Mammary epithelial cell (primary cell): ENCODE measurements at regions of chr11 and their contacts with region 1.

Region 1: DNA sequence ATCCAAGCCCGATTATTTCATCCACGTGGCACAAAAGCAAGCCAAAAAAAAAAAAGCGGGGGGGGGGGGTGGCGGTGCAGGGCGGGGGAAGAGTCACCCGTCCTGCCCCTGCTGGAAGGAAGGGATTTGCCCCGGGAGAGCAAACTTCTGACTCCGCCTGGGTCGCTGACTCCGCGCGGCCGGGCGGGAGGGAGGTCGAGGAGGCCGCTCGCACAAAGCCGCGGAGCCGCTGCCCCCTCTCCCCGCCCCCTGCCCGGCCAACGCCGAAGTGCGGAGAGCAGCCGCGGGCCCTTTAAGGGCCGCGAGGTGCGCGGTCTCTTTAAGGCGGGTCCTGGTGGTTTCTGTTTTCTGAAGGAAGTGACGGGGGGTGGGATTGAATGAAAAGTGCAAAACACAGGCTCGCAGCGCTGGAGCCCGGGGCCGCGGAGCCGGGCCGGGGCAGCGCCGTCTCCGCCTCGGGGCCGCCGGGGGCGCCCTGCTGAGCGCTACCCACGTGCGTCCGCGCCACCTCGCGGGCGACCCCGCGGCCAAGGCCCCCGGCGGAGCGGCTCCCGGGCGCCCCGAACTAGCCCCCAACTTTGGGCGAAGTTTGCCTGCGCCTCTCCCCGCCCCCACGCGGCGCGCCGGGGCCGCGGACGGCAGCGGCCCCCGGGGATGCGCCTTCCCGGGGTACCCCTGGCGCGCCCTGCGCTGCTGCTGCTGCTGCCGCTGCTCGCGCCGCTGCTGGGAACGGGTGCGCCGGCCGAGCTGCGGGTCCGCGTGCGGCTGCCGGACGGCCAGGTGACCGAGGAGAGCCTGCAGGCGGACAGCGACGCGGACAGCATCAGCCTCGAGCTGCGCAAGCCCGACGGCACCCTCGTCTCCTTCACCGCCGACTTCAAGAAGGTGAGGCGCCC is at the start of gene OAF:
- DNase-seq: peak; percentile 80
- H3K4me3 ChIP-seq: peak within 1 kb of the TSS; percentile 53 to 63 (median 63)
- H3K27ac ChIP-seq: peak within 1 kb of the TSS; percentile 59
- H3K4me1 ChIP-seq: peaks cover 17% of the 10 kb centered on the region
- H3K27me3 ChIP-seq: no peaks in the 10 kb centered on the region
- CTCF ChIP-seq: peak; percentile 13 to 16
- total RNA-seq, gene OAF: 4.7 to 20.3 TPM

Region 2: DNA sequence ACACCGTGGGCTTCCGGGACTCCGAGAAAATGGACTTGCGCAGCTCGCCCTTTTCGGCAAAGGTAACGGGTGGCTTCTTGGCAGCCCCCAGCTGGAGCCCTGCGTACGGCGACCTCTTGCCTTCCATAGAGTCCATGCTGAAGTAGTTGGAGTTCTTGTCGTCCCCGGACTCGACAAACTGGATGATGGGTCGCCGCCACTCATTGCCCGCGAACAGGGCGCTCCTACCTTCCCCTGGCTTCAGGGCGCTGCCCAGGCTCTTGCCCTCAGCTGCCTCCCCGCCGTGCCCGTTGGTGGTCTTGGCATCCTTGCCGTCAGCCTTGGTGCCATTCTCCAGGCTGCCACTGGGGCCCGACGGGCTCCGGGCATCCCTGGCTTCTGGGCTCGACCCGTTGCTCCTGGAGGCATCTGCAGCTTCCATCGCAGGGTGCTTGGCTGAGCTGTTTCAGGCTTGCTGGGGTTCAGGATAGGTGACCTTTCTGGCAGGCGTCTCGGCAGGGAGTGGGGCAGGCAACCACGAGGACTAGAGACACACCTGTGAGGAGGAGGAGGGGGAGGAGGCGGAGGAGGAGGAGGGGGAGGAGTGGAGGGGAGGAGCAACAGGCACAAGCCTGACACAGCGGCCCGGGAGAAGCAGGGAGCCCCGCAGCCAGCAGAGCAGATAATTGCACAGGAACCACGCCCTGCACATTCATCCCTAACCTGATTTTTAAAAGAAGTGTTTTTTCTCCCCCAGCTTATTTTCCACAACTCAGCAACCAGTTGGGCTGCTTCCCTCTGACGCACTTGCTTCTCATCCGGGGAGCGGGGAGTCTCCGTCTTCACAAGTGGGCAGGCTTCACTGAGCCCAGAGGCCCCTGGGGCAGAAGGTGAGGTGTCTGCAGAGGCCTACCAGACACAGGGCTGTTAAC is 73.0 kb before region 1 on chr11 and contains the start of gene TRIM29:
- CTCF ChIA-PET with region 1: no interaction called
- dilution Hi-C with region 1: no loop called
- in situ Hi-C with region 1: no loop called
- intact Hi-C with region 1: loop called (anchors 10 kb)
- DNase-seq: peak; percentile 92
- H3K4me3 ChIP-seq: peak within 1 kb of the TSS; percentile 51 to 97 (median 96)
- H3K27ac ChIP-seq: peak within 1 kb of the TSS; percentile 78
- H3K4me1 ChIP-seq: peaks cover 37% of the 10 kb centered on the region
- H3K27me3 ChIP-seq: no peaks in the 10 kb centered on the region
- CTCF ChIP-seq: peak; percentile 59 to 60
- total RNA-seq, gene TRIM29: 256 to 341 TPM

Region 3: GRCh38 chr11:120186774-120187591 is 23.9 kb before region 1 on chr11:
- CTCF ChIA-PET with region 1: no interaction called
- dilution Hi-C with region 1: no loop called
- in situ Hi-C with region 1: no loop called
- intact Hi-C with region 1: loop called (anchors 2 kb)
- DNase-seq: peak; percentile 93
- H3K4me3 ChIP-seq: no peak overlapping the region
- H3K27ac ChIP-seq: no peak overlapping the region
- H3K4me1 ChIP-seq: peaks cover 8% of the 10 kb centered on the region
- H3K27me3 ChIP-seq: no peaks in the 10 kb centered on the region
- CTCF ChIP-seq: no peak

Region 4: GRCh38 chr11:120229451-120230424 is 18.9 kb after region 1 on chr11:
- CTCF ChIA-PET with region 1: no interaction called
- dilution Hi-C with region 1: no loop called
- in situ Hi-C with region 1: no loop called
- intact Hi-C with region 1: loop called (anchors 2 kb)
- DNase-seq: no peak
- H3K4me3 ChIP-seq: no peak overlapping the region
- H3K27ac ChIP-seq: no peak overlapping the region
- H3K4me1 ChIP-seq: no peaks in the 10 kb centered on the region
- H3K27me3 ChIP-seq: no peaks in the 10 kb centered on the region
- CTCF ChIP-seq: peak; percentile 64 to 71

Region 5: GRCh38 chr11:120254788-120255518 is 44.1 kb after region 1 on chr11:
- CTCF ChIA-PET with region 1: no interaction called
- dilution Hi-C with region 1: loop called (anchors 5 kb)
- in situ Hi-C with region 1: no loop called
- intact Hi-C with region 1: no loop called
- DNase-seq: no peak
- H3K4me3 ChIP-seq: no peak overlapping the region
- H3K27ac ChIP-seq: no peak overlapping the region
- H3K4me1 ChIP-seq: no peaks in the 10 kb centered on the region
- H3K27me3 ChIP-seq: no peaks in the 10 kb centered on the region
- CTCF ChIP-seq: no peak

Region 6: DNA sequence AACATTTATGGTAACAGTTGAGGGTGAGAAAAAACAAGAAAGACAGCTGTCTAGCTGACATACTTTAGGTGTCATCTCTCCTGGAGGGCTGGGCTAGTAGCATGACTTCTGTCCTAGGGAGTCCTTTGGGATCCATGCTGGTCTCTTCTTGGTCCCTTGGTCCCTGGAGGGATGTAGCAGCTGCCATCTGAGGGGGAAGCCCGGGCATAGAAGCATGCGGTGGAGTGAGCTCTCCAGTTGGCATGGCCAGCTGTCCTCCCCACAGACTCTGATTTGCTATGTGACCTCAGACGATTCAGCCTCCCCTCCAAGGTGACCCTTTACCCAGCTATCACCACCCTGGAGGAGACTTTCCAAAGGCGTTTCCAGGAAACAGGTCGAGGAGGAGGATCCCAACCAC is 57.8 kb after region 1 on chr11:
- CTCF ChIA-PET with region 1: no interaction called
- dilution Hi-C with region 1: no loop called
- in situ Hi-C with region 1: no loop called
- intact Hi-C with region 1: no loop called
- DNase-seq: no peak
- H3K4me3 ChIP-seq: no peak overlapping the region
- H3K27ac ChIP-seq: no peak overlapping the region
- H3K4me1 ChIP-seq: peaks cover 21% of the 10 kb centered on the region
- H3K27me3 ChIP-seq: no peaks in the 10 kb centered on the region
- CTCF ChIP-seq: no peak